HCT116 (cell line): ENCODE measurements at regions of chr12 and their contacts with region 1.

Region 1: GRCh38 chr12:100404769-100405407 is 48.0 kb downstream of the SLC17A8 start:
- DNase-seq: peak; percentile 84
- ATAC-seq: peak; percentile 98
- H3K4me3 ChIP-seq: no peak overlapping the region
- H3K27ac ChIP-seq: no peak overlapping the region
- H3K4me1 ChIP-seq: peaks cover 3 to 5% of the 10 kb centered on the region in 2 experiments; a peak in 3 of 4 replicates
- H3K27me3 ChIP-seq: no peaks in the 10 kb centered on the region
- CTCF ChIP-seq: peak; percentile 64 to 90 (median 88)
- POLR2A ChIP-seq: no peak
- RAD21 ChIP-seq: peak; percentile 76

Region 2: GRCh38 chr12:100234598-100235304 is 170.1 kb before region 1 on chr12:
- CTCF ChIA-PET with region 1: interaction called, 9 read pairs
- POLR2A ChIA-PET with region 1: no interaction called
- RAD21 ChIA-PET with region 1: interaction called, 5 to 10 read pairs
- intact Hi-C with region 1: loop called (anchors 10 kb)
- DNase-seq: peak; percentile 29
- ATAC-seq: peak; percentile 82
- H3K4me3 ChIP-seq: no peak overlapping the region
- H3K27ac ChIP-seq: no peak overlapping the region
- H3K4me1 ChIP-seq: peaks cover 6 to 7% of the 10 kb centered on the region in 2 experiments; a peak in 3 of 4 replicates
- H3K27me3 ChIP-seq: no peaks in the 10 kb centered on the region
- CTCF ChIP-seq: peak; percentile 66 to 77 (median 73); a peak in 5 of 6 replicates
- POLR2A ChIP-seq: no peak
- RAD21 ChIP-seq: peak; percentile 80

Region 3: DNA sequence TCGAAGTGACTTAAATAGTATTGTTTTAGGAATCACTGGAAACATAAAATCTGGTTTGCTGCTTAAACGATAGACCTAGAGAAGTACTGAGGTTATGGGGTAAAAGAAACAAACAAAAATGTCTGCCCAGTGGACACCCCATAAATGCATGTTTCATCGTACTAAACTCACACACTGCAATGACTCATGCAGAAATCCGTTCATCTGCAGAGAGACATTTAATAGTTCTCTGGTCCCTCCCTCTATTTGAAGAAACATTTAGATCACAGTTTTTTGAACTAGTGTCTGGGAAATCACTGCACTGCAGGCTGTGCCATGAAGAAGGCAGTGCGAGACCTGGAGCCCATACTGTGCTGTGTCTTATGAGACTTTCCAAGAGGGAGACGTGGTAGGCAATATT is 22.6 kb before region 1 on chr12:
- CTCF ChIA-PET with region 1: interaction called, 11 read pairs
- POLR2A ChIA-PET with region 1: no interaction called
- RAD21 ChIA-PET with region 1: no interaction called
- intact Hi-C with region 1: no loop called
- DNase-seq: no peak
- ATAC-seq: no peak
- H3K4me3 ChIP-seq: no peak overlapping the region
- H3K27ac ChIP-seq: no peak overlapping the region
- H3K4me1 ChIP-seq: no peaks in the 10 kb centered on the region
- H3K27me3 ChIP-seq: 0 out of 2 replicates have a peak, but pooled peaks cover 5% of the 10 kb centered on the region
- CTCF ChIP-seq: no peak
- POLR2A ChIP-seq: no peak
- RAD21 ChIP-seq: no peak

Region 4: GRCh38 chr12:100427078-100427477 is 22.2 kb after region 1 on chr12:
- CTCF ChIA-PET with region 1: interaction called, 12 read pairs
- POLR2A ChIA-PET with region 1: no interaction called
- RAD21 ChIA-PET with region 1: no interaction called
- intact Hi-C with region 1: no loop called
- DNase-seq: peak; percentile 23
- ATAC-seq: peak; percentile 65
- H3K4me3 ChIP-seq: no peak overlapping the region
- H3K27ac ChIP-seq: no peak overlapping the region
- H3K4me1 ChIP-seq: peaks cover 0 to 5% of the 10 kb centered on the region in 2 experiments; a peak in 1 of 4 replicates
- H3K27me3 ChIP-seq: no peaks in the 10 kb centered on the region
- CTCF ChIP-seq: no peak
- POLR2A ChIP-seq: no peak
- RAD21 ChIP-seq: no peak

Region 5: DNA sequence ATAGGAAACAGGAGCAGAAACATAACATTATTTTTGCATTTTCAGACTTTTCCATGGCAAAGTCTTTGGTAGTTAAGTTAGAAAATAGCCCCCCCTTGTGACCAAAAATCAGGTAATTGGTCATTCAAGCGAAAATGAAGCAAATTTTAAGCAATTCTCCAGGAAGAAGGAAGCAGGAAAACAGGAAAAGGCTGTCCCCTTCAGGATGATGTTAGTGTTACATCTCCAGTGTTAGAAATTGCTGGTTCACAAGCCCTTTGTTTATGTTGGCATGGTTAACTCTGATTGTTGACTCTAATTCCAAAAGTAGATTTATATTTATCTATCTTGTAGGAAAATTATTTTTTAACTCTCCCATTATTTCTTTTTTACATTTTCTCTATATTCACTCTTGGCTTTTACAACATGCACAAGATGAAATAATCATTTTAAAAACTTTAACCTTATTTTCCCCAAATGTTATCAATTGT is 149.8 kb after region 1 on chr12:
- CTCF ChIA-PET with region 1: interaction called, 11 read pairs
- POLR2A ChIA-PET with region 1: no interaction called
- RAD21 ChIA-PET with region 1: interaction called in 1 of 2 experiments, 3 read pairs
- intact Hi-C with region 1: no loop called
- DNase-seq: peak; percentile 86
- ATAC-seq: peak; percentile 89
- H3K4me3 ChIP-seq: no peak overlapping the region
- H3K27ac ChIP-seq: no peak overlapping the region
- H3K4me1 ChIP-seq: no peaks in the 10 kb centered on the region
- H3K27me3 ChIP-seq: no peaks in the 10 kb centered on the region
- CTCF ChIP-seq: peak; percentile 83 to 99 (median 94)
- POLR2A ChIP-seq: no peak
- RAD21 ChIP-seq: peak; percentile 96